CD8-positive, alpha-beta T cell (primary cell): ENCODE measurements at regions of chr5 and their contacts with region 1.

Region 1: DNA sequence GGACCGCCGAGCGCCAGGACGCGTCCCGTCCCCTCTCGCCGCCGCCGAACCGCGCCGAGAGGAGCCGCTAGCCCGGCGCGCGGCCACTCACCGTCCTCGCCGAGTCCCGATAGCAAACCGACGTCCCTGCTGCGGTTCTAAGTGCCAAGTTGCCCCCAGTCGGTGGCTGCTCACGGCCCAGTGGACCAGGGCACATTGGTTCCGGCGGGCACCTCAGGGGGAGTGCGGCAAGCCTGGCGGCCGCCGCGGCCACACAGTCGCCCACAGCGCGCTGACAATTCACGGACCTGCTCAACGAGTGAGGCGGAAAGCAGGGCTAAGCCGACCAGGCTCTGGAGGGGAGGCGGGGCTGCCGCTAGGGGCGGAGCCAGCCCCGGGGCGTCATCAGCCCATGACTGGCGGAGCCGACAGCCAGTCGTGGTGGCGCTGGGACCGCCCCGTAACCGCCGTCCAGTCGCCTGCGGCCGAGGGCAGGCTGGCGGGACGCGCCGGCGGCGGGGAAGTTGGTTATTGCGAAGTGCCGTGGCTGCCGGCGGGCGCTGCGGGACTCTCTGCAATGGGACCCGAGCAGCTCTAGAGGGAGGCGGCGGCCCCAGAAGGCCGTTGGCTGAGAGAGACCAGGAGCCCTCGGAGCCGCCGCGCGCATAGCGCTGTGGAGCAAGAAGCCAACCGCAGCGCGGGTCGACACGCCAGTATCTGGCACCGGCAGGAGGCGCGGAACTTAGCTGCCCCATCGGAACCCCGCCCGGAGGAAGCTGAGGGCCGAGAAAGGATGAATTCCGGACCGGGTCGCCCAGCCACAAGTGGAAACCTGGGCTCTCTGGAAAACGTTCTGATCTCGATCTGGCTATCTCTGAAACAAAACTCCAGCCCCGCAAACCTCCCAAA is at the start of gene MARCHF3:
- DNase-seq: peak; percentile 86 to 96 (median 92)
- ATAC-seq: peak; percentile 95
- H3K4me3 ChIP-seq: peak within 1 kb of the TSS; percentile 81 to 87
- H3K4me3 Mint-ChIP-seq: peak within 1 kb of the TSS; percentile 93
- H3K27ac ChIP-seq: peak within 1 kb of the TSS; percentile 49 to 54
- H3K27ac Mint-ChIP-seq: peak within 1 kb of the TSS; percentile 64
- H3K4me1 ChIP-seq: peaks cover 8% of the 10 kb centered on the region
- H3K4me1 Mint-ChIP-seq: peaks cover 25% of the 10 kb centered on the region
- H3K27me3 ChIP-seq: no peaks in the 10 kb centered on the region
- H3K27me3 Mint-ChIP-seq: peaks cover 7% of the 10 kb centered on the region
- CTCF ChIP-seq: no peak
- total RNA-seq, gene MARCHF3: 7.7 to 9.7 TPM

Region 2: DNA sequence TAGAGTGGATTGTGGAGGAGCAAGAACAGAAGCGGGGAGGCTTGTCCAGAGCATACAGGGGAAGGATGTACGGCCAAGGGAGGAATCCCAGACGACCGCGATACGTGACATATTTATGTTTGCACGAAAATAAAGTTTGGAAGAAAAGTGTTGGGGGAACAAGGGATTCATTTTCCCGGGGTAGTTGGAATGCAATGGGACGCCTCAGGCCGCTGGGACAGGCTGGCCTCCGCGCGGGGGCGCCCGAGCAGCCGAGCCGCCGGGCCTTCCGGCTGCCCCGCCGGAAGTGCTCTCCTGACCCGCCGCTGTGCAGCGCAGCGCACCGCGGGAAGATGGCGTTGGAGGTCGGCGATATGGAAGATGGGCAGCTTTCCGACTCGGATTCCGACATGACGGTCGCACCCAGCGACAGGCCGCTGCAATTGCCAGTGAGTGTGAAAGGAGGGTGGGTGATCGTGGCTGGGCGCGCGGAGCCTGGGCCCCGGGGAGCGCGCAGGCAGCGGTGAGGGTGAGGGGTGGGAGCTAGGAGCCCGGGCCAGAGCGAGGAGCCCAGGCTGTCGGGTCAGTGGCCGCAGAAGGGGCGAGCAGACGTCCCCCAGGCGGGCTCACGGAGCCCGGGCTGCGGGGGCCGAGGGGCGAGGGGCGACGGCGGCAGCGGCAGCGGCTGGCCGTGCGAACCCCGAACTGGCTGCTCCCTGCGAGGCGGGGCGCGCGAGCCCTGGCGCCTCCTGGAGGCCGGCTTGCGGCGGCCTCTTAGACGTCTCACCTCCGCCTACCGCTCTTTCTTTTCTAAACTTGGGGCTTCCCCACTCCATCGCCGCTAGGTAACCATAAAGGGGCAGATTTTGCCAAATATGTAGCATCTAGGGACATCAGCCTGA is 429.6 kb before region 1 on chr5 and contains the start of gene PHAX:
- CTCF ChIA-PET with region 1: no interaction called
- POLR2A ChIA-PET with region 1: no interaction called
- intact Hi-C with region 1: loop called (anchors 5 kb)
- DNase-seq: peak; percentile 47 to 87 (median 70)
- ATAC-seq: peak; percentile 94
- H3K4me3 ChIP-seq: peak within 1 kb of the TSS; percentile 88 to 98
- H3K4me3 Mint-ChIP-seq: peak within 1 kb of the TSS; percentile 98
- H3K27ac ChIP-seq: peak within 1 kb of the TSS; percentile 83 to 85
- H3K27ac Mint-ChIP-seq: peak within 1 kb of the TSS; percentile 96
- H3K4me1 ChIP-seq: peaks cover 29% of the 10 kb centered on the region
- H3K4me1 Mint-ChIP-seq: peaks cover 33% of the 10 kb centered on the region
- H3K27me3 ChIP-seq: no peaks in the 10 kb centered on the region
- H3K27me3 Mint-ChIP-seq: no peaks in the 10 kb centered on the region
- CTCF ChIP-seq: peak; percentile 66
- total RNA-seq, gene PHAX: 29.4 to 32.8 TPM

Region 3: GRCh38 chr5:126852091-126852571 is 178.4 kb before region 1 on chr5:
- CTCF ChIA-PET with region 1: interaction called, 3 read pairs
- POLR2A ChIA-PET with region 1: interaction called, 16 read pairs
- intact Hi-C with region 1: loop called (anchors 2 to 5 kb)
- DNase-seq: peak in 5 of 9 experiments; percentile 19 to 65 (median 48)
- ATAC-seq: peak; percentile 70
- H3K4me3 ChIP-seq: peak overlapping the region; percentile 1 to 47
- H3K4me3 Mint-ChIP-seq: peak overlapping the region; percentile 88
- H3K27ac ChIP-seq: peak overlapping the region; percentile 56 to 59
- H3K27ac Mint-ChIP-seq: peak overlapping the region; percentile 98
- H3K4me1 ChIP-seq: peaks cover 38% of the 10 kb centered on the region
- H3K4me1 Mint-ChIP-seq: peaks cover 70% of the 10 kb centered on the region
- H3K27me3 ChIP-seq: no peaks in the 10 kb centered on the region
- H3K27me3 Mint-ChIP-seq: no peaks in the 10 kb centered on the region
- CTCF ChIP-seq: no peak

Region 4: GRCh38 chr5:126988021-126988569 is 42.4 kb before region 1 on chr5:
- CTCF ChIA-PET with region 1: no interaction called
- POLR2A ChIA-PET with region 1: no interaction called
- intact Hi-C with region 1: loop called (anchors 5 kb)
- DNase-seq: peak in 5 of 9 experiments; percentile 6 to 80 (median 43)
- ATAC-seq: peak; percentile 91
- H3K4me3 ChIP-seq: no peak overlapping the region
- H3K4me3 Mint-ChIP-seq: peak overlapping the region; percentile 77
- H3K27ac ChIP-seq: peak overlapping the region in 1 of 2 experiments; percentile 21
- H3K27ac Mint-ChIP-seq: peak overlapping the region; percentile 96
- H3K4me1 ChIP-seq: peaks cover 21% of the 10 kb centered on the region
- H3K4me1 Mint-ChIP-seq: peaks cover 49% of the 10 kb centered on the region
- H3K27me3 ChIP-seq: no peaks in the 10 kb centered on the region
- H3K27me3 Mint-ChIP-seq: no peaks in the 10 kb centered on the region
- CTCF ChIP-seq: no peak

Region 5: DNA sequence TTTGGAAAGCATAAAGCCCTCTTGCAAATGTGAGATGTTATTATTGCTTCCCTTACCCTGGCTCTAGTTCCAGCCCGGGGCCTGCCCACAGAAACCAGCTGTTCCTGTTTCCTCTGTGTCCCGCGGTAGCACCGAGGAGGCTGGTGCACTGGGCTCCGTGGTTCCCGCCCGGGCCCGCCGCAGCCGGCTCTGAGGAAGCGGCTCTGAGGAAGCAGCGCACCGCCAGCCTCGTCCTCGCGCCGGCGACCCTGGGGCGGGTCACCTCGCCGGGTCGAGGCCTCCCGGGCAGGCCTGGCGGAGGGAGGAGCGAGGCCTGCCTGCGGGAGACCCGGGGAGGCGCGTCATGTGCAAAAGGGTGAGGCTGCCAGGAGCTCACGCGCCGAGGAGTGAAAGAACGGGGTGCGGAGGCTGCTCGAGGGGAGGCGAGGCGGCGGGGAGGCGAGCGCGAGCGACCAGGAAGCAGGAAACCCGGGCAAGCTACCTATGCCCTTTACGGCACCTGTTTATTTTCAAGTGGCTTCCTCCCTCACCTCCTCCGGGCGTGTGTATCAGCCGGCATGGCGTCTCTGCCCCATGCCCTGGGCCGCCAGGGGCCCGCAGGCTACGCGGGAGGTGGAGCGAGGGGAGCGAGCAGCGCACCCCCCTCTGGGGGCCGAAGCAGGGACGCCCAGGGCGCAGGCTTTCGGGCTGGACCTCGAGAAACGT is 198.8 kb after region 1 on chr5:
- CTCF ChIA-PET with region 1: no interaction called
- POLR2A ChIA-PET with region 1: interaction called, 3 read pairs
- intact Hi-C with region 1: loop called in 1 of 2 experiments (anchors 1 kb)
- DNase-seq: peak; percentile 9 to 82 (median 47)
- ATAC-seq: peak; percentile 84
- H3K4me3 ChIP-seq: peak overlapping the region; percentile 62 to 83
- H3K4me3 Mint-ChIP-seq: peak overlapping the region; percentile 84
- H3K27ac ChIP-seq: peak overlapping the region; percentile 62
- H3K27ac Mint-ChIP-seq: peak overlapping the region; percentile 89
- H3K4me1 ChIP-seq: peaks cover 8% of the 10 kb centered on the region
- H3K4me1 Mint-ChIP-seq: peaks cover 15% of the 10 kb centered on the region
- H3K27me3 ChIP-seq: no peaks in the 10 kb centered on the region
- H3K27me3 Mint-ChIP-seq: no peaks in the 10 kb centered on the region
- CTCF ChIP-seq: no peak

Region 6: GRCh38 chr5:127254729-127255284 is 224.3 kb after region 1 on chr5:
- CTCF ChIA-PET with region 1: no interaction called
- POLR2A ChIA-PET with region 1: no interaction called
- intact Hi-C with region 1: no loop called
- DNase-seq: no peak
- ATAC-seq: no peak
- H3K4me3 ChIP-seq: no peak overlapping the region
- H3K4me3 Mint-ChIP-seq: no peak overlapping the region
- H3K27ac ChIP-seq: no peak overlapping the region
- H3K27ac Mint-ChIP-seq: no peak overlapping the region
- H3K4me1 ChIP-seq: no peaks in the 10 kb centered on the region
- H3K4me1 Mint-ChIP-seq: no peaks in the 10 kb centered on the region
- H3K27me3 ChIP-seq: no peaks in the 10 kb centered on the region
- H3K27me3 Mint-ChIP-seq: no peaks in the 10 kb centered on the region
- CTCF ChIP-seq: no peak